HEK293 (cell line): ENCODE measurements at regions of chr2 and their contacts with region 1.

Region 1: GRCh38 chr2:139031722-139032121 is 251.5 kb upstream of the NXPH2 start:
- H3K4me3 ChIP-seq: no peak overlapping the region
- H3K27ac ChIP-seq: no peak overlapping the region
- H3K4me1 ChIP-seq: no peaks in the 10 kb centered on the region; the same call in 1 of the 2 replicates
- CTCF ChIP-seq: no peak

Region 2: DNA sequence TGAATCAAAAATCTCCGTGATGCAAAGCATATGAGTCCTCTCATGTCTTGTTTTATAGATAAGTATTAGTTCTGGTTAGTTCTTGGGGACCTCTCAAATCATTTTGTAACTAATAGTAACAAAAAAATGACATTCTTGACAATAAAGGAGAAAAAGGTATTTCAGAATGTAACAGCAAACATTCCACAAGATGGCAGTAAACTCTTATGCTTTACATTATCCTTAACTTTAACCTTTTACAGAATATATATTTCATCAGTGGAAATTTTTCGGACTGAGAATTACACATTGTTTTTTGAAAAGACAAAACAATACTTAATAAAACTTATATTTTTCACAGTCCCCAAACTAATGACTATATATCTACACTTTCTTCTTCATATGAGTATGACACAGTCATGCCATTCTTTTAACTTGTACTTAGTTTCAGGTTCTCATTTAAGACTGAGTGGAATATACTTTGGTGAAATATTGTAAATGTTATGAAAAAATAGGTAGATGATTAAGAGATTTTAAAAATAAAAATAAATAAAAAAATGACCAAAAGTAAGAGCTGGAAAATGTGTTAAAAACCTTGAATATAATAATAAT is 108.7 kb before region 1 on chr2:
- CTCF ChIA-PET with region 1: interaction called, 52 read pairs
- POLR2A ChIA-PET with region 1: no interaction called
- H3K4me3 ChIP-seq: no peak overlapping the region
- H3K27ac ChIP-seq: no peak overlapping the region
- H3K4me1 ChIP-seq: no peaks in the 10 kb centered on the region
- CTCF ChIP-seq: peak; percentile 26; the same call in 1 of the 2 replicates

Region 3: GRCh38 chr2:138948070-138948539 is 83.6 kb before region 1 on chr2:
- CTCF ChIA-PET with region 1: interaction called, 18 read pairs
- POLR2A ChIA-PET with region 1: no interaction called
- H3K4me3 ChIP-seq: no peak overlapping the region
- H3K27ac ChIP-seq: no peak overlapping the region
- H3K4me1 ChIP-seq: no peaks in the 10 kb centered on the region
- CTCF ChIP-seq: no peak